ENCODE measurements at regions of chr4 and their contacts with region 1.

Region 1: DNA sequence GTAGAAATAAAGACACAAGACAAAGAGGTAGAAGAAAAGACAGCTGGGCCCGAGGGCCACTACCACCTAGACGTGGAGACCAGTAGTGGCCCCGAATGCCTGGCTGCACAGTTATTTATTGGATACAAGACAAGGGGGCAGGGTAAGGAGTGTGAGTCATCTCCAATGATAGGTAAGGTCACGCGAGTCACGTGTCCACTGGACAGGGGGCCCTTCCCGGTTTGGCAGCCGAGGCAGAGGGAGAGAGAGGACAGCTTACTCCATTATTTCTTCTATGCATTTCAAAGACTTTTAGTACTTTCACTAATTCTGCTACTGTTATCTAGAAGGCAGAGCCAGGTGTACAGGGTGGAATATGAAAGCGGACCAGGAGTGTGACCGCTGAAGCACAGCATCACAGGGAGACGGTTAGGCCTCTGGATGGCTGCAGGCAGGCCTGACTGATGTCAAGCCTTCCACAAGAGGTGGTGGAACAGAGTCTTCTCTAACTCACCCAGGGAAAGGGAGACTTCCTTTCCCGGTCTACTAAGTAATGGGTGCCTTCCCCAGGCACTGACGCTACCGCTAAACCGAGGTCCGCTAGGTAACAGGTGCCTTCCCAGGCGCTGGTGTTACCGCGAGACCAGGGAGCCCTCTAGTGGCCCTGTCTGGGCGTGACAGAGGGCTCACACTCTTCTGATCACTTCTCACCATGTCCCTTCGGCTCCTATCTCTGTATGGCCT is 44.9 kb downstream of the ZBTB49 start:
- DNase-seq: peak; percentile 88
- H3K4me3 Mint-ChIP-seq: no peak overlapping the region
- H3K27ac Mint-ChIP-seq: no peak overlapping the region
- H3K4me1 Mint-ChIP-seq: peaks cover 8% of the 10 kb centered on the region
- H3K27me3 Mint-ChIP-seq: no peaks in the 10 kb centered on the region

Region 2: DNA sequence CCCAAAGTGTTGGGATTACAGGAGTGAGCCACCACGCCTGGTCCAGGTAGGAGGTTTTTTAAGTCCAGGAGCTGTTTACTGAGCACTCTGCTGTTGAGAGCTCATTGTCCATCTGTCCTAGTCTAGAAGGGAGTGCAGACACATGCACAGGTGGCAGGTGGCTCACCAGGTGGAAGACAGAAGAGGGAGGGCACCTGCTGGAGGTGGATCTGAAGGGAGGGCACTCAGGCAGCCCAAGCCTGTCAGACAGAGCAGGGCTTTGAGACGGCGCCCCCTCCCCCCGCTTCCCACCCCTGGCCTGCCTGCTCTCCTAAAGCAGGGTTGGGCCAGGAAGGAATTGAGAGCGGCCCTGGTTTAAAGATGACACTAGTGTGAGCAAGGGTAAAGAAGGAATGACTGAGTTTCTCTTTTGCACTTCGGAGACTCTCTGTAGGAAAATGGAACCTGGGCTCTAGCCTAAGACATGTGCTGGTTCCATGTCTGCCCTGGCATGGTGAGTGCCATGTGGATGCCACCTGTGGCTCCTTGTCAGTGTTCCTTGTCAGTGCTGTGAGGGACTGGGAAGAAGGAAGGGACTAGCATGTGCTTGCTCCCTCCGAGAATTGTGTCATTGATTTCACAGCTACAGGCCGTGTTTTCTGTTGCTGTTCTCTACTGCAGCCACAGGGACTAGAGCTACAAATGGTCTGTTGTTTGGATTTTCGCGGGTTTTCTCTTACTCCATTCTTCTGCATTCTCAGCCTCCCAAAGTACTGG is 1687.4 kb before region 1 on chr4:
- CTCF ChIA-PET with region 1: no interaction called
- intact Hi-C with region 1: no loop called
- DNase-seq: no peak
- H3K4me3 Mint-ChIP-seq: no peak overlapping the region
- H3K27ac Mint-ChIP-seq: no peak overlapping the region
- H3K4me1 Mint-ChIP-seq: peaks cover 18% of the 10 kb centered on the region
- H3K27me3 Mint-ChIP-seq: no peaks in the 10 kb centered on the region

Region 3: DNA sequence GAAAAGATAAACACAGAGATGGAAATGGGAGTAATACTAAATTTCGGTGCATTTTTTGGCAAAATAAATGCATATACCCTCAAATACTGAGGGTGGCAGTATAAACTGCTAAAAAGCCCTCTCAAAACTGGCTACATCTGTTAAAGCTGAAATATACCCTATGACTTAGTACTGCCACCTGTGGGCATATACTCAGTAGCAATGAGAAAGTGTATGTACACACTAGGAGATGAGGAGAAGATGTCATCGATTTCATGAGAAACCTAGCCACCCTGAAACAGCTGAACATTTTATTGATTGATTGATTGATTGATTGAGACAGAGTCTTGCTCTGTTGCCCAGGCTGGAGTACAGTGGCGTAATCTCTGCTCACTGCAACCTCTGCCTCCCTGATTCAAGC is 74.7 kb before region 1 on chr4:
- CTCF ChIA-PET with region 1: interaction called, 8 read pairs
- intact Hi-C with region 1: loop called (anchors 2 kb)
- DNase-seq: no peak
- H3K4me3 Mint-ChIP-seq: no peak overlapping the region
- H3K27ac Mint-ChIP-seq: no peak overlapping the region
- H3K4me1 Mint-ChIP-seq: no peaks in the 10 kb centered on the region
- H3K27me3 Mint-ChIP-seq: no peaks in the 10 kb centered on the region

Region 4: DNA sequence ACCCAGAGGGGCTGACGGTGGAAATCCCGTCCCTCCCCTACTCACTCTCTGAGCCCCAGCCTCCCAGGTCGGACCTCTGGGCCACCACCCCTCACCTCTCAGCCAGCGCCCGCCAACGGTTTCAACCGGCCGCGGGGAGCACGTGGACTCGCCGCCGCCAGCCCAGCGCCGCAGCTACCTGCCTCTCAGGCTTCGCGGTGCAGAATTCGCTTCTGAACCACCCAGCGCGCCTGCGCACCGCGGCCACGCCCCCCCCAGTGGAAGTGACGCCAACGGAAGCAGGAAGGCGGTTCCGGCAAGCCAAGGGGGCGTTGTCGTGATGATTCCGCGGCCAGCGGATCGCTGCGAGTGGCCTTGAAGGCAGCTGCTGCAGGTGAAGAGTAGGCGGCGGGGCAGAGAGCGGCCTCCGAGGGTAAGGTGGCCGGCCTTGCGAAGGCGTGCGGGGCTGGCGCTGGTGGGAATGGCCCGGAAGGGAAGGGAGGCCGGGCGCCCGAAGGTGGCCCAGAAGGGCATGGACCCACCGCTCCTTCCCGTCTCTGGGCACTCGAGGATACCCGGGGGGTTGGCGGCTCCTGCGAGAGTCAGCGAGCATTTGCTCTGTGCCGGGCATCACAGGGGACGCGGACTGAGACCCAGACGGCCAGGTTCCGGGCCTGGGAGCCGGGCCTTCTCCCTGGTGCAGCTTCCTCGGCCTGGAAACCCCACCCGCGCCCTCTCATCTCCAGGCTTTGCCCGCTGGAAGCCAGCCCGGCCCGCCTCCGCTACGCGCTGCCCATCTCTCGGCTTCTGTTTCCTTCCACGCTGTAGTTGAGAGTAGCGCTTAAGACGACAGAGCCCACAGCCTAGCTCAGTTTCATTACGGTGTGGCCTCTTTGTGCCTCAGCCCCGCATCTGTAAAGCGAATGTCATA is 44.8 kb before region 1 on chr4 and contains the starts of genes LYAR and ZBTB49:
- CTCF ChIA-PET with region 1: no interaction called
- intact Hi-C with region 1: loop called (anchors 1 kb)
- DNase-seq: peak; percentile 96
- H3K4me3 Mint-ChIP-seq: peak within 1 kb of the TSS; percentile 95
- H3K27ac Mint-ChIP-seq: peak within 1 kb of the TSS; percentile 78
- H3K4me1 Mint-ChIP-seq: peaks cover 55% of the 10 kb centered on the region
- H3K27me3 Mint-ChIP-seq: no peaks in the 10 kb centered on the region
- total RNA-seq, gene LYAR: 42.3 to 42.4 TPM
- total RNA-seq, gene ZBTB49: 4.2 to 4.5 TPM

Measured in activated naive CD4-positive, alpha-beta T cell treated with anti-CD3 and anti-CD28 coated beads for 36 hours (primary cell).